ENCODE measurements at regions of chr9 and their contacts with region 1.

Region 1: GRCh38 chr9:126861707-126862103 is 1.3 kb downstream of the ZBTB34 start:
- DNase-seq: peak in 1 of 4 experiments; percentile 64
- ATAC-seq: peak; percentile 52
- H3K4me3 ChIP-seq: peak overlapping the region; percentile 75
- H3K27ac ChIP-seq: peak overlapping the region; percentile 72
- H3K4me1 ChIP-seq: peaks cover 14 to 26% of the 10 kb centered on the region in 2 experiments
- H3K27me3 ChIP-seq: no peaks in the 10 kb centered on the region; a peak in 1 of 5 replicates
- CTCF ChIP-seq: no peak
- EP300 ChIP-seq: no peak
- POLR2A ChIP-seq: no peak
- RAD21 ChIP-seq: no peak

Region 2: DNA sequence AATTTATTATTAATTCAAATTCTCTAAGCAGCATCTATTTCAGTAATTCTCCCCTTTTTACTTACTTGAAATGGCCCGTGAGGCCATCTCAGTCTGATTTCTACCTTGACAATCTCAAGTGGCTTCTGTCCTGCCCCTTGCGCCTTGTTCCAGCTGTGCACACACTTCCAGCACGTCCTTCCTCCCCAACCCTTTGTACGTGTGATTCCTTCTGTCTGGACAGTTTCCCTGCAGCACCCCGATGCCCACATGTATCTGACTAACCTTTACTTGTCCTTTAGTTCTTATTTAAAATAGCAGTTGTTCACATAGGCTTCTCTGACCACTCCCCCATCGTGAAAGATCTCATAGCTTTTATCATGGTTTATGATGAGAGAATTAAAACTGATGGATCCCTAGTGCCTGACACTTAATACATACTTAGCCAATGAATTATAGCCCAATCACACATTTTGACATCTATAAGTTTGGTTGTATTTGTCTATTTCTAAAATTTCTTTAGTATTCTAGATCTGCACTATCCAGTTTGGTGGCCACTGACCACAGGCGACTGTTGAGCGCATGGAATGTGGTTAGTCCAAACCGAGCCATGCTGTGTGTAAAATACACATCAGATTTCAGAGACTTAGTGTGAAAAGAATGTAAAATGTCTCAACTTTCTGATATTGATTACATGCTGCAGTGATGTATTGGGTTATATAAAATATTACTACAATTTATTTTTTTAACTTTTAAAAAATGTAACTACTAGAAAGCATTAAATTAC is 13.0 kb after region 1 on chr9:
- CTCF ChIA-PET with region 1: no interaction called
- POLR2A ChIA-PET with region 1: interaction called, 20 read pairs
- in situ Hi-C with region 1: no loop called
- intact Hi-C with region 1: no loop called
- DNase-seq: no peak
- ATAC-seq: peak; percentile 57
- H3K4me3 ChIP-seq: no peak overlapping the region
- H3K27ac ChIP-seq: no peak overlapping the region
- H3K4me1 ChIP-seq: peaks cover 3 to 7% of the 10 kb centered on the region in 2 experiments; a peak in 1 of 5 replicates
- H3K27me3 ChIP-seq: no peaks in the 10 kb centered on the region
- CTCF ChIP-seq: no peak
- EP300 ChIP-seq: no peak
- POLR2A ChIP-seq: no peak
- RAD21 ChIP-seq: no peak